Naive thymus-derived CD4-positive, alpha-beta T cell (primary cell): ENCODE measurements at regions of chr12 and their contacts with region 1.

Region 1: GRCh38 chr12:94980577-94980976 is 22.9 kb downstream of the NDUFA12 start:
- DNase-seq: peak in 7 of 9 donors; percentile 20 to 73 (median 60)
- ATAC-seq: peak; percentile 76
- H3K4me3 ChIP-seq: no peak overlapping the region
- H3K4me3 Mint-ChIP-seq: peak overlapping the region in 9 of 10 donors; percentile 24 to 73 (median 59)
- H3K27ac ChIP-seq: no peak overlapping the region
- H3K27ac Mint-ChIP-seq: peak overlapping the region in 8 of 9 donors; percentile 30 to 86 (median 72)
- H3K4me1 ChIP-seq: peaks cover 0 to 32% of the 10 kb centered on the region in 2 donors
- H3K4me1 Mint-ChIP-seq: peaks cover 22 to 88% (median 67%) of the 10 kb centered on the region in 7 donors
- H3K27me3 ChIP-seq: no peaks in the 10 kb centered on the region
- H3K27me3 Mint-ChIP-seq: no peaks in the 10 kb centered on the region

Region 2: GRCh38 chr12:94133964-94134795 is 846.4 kb before region 1 on chr12:
- CTCF ChIA-PET with region 1: no interaction called
- POLR2A ChIA-PET with region 1: no interaction called
- intact Hi-C with region 1: loop called in 1 of 2 experiments (anchors 1 kb)
- DNase-seq: peak in 7 of 9 donors; percentile 34 to 65 (median 59)
- ATAC-seq: peak; percentile 97
- H3K4me3 ChIP-seq: no peak overlapping the region
- H3K4me3 Mint-ChIP-seq: no peak overlapping the region
- H3K27ac ChIP-seq: no peak overlapping the region
- H3K27ac Mint-ChIP-seq: peak overlapping the region in 2 of 9 donors; percentile 16 to 28
- H3K4me1 ChIP-seq: no peaks in the 10 kb centered on the region
- H3K4me1 Mint-ChIP-seq: peaks cover 0 to 10% (median 4%) of the 10 kb centered on the region in 7 donors
- H3K27me3 ChIP-seq: no peaks in the 10 kb centered on the region
- H3K27me3 Mint-ChIP-seq: peaks cover 0 to 11% (median 0%) of the 10 kb centered on the region in 5 donors

Region 3: GRCh38 chr12:94532490-94533422 is 447.8 kb before region 1 on chr12:
- CTCF ChIA-PET with region 1: no interaction called
- POLR2A ChIA-PET with region 1: no interaction called
- intact Hi-C with region 1: loop called in 1 of 2 experiments (anchors 5 kb)
- DNase-seq: peak; percentile 20 to 68 (median 56)
- ATAC-seq: peak; percentile 80
- H3K4me3 ChIP-seq: no peak overlapping the region
- H3K4me3 Mint-ChIP-seq: no peak overlapping the region
- H3K27ac ChIP-seq: no peak overlapping the region
- H3K27ac Mint-ChIP-seq: no peak overlapping the region
- H3K4me1 ChIP-seq: no peaks in the 10 kb centered on the region
- H3K4me1 Mint-ChIP-seq: peaks cover 0 to 17% (median 3%) of the 10 kb centered on the region in 7 donors
- H3K27me3 ChIP-seq: no peaks in the 10 kb centered on the region
- H3K27me3 Mint-ChIP-seq: peaks cover 3 to 19% (median 8%) of the 10 kb centered on the region in 5 donors

Region 4: DNA sequence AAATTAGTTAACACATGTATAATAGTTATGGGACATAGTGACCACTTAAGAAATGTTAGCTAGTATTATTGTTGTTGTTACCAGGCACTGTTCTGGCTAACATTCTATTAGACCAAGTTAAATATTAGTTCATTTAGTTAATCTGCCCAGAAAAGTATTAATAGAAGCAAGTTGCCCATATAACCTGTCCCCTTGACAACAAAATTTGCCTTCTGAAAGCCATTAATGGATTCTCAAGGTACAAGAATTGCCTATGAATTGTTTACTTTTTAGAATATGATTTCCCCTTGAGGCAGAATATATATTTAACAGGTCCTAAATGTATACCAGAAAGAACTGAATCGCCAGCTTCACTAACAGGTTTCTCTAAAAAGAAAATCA is 162.9 kb before region 1 on chr12:
- CTCF ChIA-PET with region 1: no interaction called
- POLR2A ChIA-PET with region 1: no interaction called
- intact Hi-C with region 1: loop called in 1 of 2 experiments (anchors 1 kb)
- DNase-seq: no peak
- ATAC-seq: no peak
- H3K4me3 ChIP-seq: no peak overlapping the region
- H3K4me3 Mint-ChIP-seq: no peak overlapping the region
- H3K27ac ChIP-seq: no peak overlapping the region
- H3K27ac Mint-ChIP-seq: no peak overlapping the region
- H3K4me1 ChIP-seq: no peaks in the 10 kb centered on the region
- H3K4me1 Mint-ChIP-seq: peaks cover 0 to 2% (median 0%) of the 10 kb centered on the region in 7 donors
- H3K27me3 ChIP-seq: no peaks in the 10 kb centered on the region
- H3K27me3 Mint-ChIP-seq: peaks cover 0 to 7% (median 5%) of the 10 kb centered on the region in 5 donors

Region 5: GRCh38 chr12:95096852-95097251 is 116.3 kb after region 1 on chr12:
- CTCF ChIA-PET with region 1: no interaction called
- POLR2A ChIA-PET with region 1: no interaction called
- intact Hi-C with region 1: no loop called
- DNase-seq: no peak
- ATAC-seq: no peak
- H3K4me3 ChIP-seq: no peak overlapping the region
- H3K4me3 Mint-ChIP-seq: no peak overlapping the region
- H3K27ac ChIP-seq: no peak overlapping the region
- H3K27ac Mint-ChIP-seq: no peak overlapping the region
- H3K4me1 ChIP-seq: no peaks in the 10 kb centered on the region
- H3K4me1 Mint-ChIP-seq: no peaks in the 10 kb centered on the region
- H3K27me3 ChIP-seq: no peaks in the 10 kb centered on the region
- H3K27me3 Mint-ChIP-seq: peaks cover 0 to 9% (median 0%) of the 10 kb centered on the region in 5 donors

Region 6: GRCh38 chr12:95548539-95549391 is 568.2 kb after region 1 on chr12:
- CTCF ChIA-PET with region 1: no interaction called
- POLR2A ChIA-PET with region 1: no interaction called
- intact Hi-C with region 1: loop called in 1 of 2 experiments (anchors 10 kb)
- DNase-seq: peak; percentile 66 to 81 (median 77)
- ATAC-seq: peak; percentile 94
- H3K4me3 ChIP-seq: peak overlapping the region; percentile 75
- H3K4me3 Mint-ChIP-seq: peak overlapping the region; percentile 89 to 96 (median 94)
- H3K27ac ChIP-seq: peak overlapping the region; percentile 96
- H3K27ac Mint-ChIP-seq: peak overlapping the region; percentile 70 to 98 (median 94)
- H3K4me1 ChIP-seq: peaks cover 6 to 23% of the 10 kb centered on the region in 2 donors
- H3K4me1 Mint-ChIP-seq: peaks cover 36 to 73% (median 61%) of the 10 kb centered on the region in 7 donors
- H3K27me3 ChIP-seq: no peaks in the 10 kb centered on the region
- H3K27me3 Mint-ChIP-seq: peaks cover 0 to 22% (median 7%) of the 10 kb centered on the region in 5 donors